Activated CD8-positive, alpha-beta T cell treated with anti-CD3 and anti-CD28 coated beads, Interleukin-2, amount 10 ng/mL, durations not matched to agents 7 days and 5 days (primary cell): ENCODE measurements at regions of chr3 and their contacts with region 1.

Region 1: DNA sequence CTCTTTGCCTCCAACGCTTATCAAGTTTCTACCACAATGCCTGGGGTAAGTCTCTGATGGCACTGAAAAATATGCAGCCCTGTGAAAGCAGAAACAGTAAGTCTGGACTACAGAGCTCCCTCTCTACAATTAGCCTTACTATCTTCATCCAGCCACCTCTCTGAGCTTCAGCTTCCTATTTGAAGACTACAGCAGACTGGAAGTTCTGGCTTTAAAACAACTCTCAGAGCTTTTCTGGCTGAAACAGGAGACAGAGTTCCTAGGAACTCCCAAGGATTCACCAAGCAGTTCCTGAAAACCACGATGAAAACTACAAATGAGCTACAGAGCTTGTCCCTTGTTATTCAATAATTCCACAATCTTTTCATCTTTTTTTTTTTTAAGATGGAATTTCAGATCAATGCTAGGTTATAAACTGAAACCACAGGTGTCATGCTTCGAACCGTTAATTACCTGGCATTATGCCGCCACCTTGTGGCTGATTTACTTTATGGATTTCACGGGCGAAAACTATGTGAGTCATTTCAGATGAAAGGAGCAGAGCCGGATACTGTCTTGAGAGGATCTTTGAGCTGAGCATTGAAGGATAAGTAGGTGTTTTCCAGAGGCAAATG is 3.9 kb downstream of the CRYGS start:
- DNase-seq: peak; percentile 88
- ATAC-seq: peak; percentile 91
- H3K4me3 Mint-ChIP-seq: no peak overlapping the region
- H3K27ac Mint-ChIP-seq: no peak overlapping the region
- H3K4me1 Mint-ChIP-seq: peaks cover 11% of the 10 kb centered on the region
- H3K27me3 Mint-ChIP-seq: no peaks in the 10 kb centered on the region

Region 2: DNA sequence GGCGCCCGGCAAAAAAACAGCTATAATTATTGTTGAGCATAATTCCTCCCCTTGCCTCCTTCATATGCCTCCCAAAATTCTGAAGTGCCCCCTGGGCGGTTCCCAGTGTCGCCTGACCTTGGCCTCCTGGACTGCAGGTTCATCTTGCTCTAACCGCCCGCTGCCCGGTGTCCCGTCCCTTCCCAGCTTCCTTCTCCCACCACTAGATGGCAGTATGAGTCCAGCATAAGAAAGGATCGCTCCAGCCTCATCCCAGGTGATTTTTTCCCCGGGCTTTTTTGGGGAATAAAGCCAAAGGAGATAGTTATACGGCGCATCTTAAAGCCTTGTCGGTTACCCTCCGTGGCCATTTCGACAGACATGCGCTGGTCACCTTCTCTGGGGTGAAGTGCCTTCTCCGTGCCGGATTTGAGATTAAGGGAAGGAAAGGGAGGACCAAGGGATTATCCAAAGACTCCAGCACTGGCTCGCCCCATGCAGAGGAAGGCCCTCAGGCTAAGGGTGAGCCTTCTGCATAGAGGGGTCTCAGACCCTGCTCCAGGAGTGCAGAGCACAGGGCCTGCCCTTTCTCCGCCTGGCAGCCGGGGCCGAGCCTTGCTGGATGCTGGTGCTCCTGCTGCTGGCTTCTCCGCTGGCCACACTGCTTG is 556.7 kb before region 1 on chr3:
- CTCF ChIA-PET with region 1: interaction called, 47 read pairs
- POLR2A ChIA-PET with region 1: interaction called, 4 read pairs
- DNase-seq: peak; percentile 61
- ATAC-seq: peak; percentile 83
- H3K4me3 Mint-ChIP-seq: no peak overlapping the region
- H3K27ac Mint-ChIP-seq: no peak overlapping the region
- H3K4me1 Mint-ChIP-seq: peaks cover 4% of the 10 kb centered on the region
- H3K27me3 Mint-ChIP-seq: peaks cover 17% of the 10 kb centered on the region

Region 3: DNA sequence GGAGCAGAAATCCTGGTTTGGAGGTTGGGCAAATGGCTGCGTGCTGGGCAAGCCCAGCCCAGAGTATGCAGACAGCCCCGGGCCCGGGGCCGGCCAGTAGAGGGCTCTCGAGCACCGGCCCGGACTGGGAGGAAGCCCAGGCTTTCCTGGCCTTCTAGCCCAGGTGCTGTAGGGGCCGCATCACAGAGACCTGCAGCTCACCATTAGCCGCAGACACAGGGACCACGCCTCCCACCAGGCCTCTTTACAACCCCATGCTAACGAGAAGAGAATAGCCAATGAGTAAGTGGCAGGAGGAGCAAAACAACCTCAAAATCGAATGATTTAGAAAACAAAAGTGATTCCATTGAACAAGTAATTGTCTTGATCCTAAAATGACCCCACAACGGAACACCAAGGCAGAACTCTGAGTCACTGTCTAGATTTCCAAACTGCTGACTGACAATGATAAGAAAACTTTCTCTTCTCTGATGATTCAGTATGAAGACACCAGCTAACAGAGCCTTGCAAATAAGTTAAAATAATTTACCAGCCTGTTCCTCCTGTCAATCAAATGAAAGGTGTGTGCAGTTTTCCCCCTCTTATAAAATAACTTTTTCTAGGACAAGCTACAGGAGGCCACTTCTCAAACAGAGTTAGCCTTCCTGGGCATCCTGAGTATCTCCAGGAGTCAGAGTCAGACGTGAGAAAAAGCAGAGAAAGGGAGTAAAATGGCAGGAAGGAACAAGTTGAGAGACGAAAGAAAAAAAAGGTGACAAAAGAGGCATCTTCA is 280.5 kb before region 1 on chr3:
- CTCF ChIA-PET with region 1: interaction called, 179 read pairs
- POLR2A ChIA-PET with region 1: no interaction called
- DNase-seq: peak; percentile 68
- ATAC-seq: peak; percentile 96
- H3K4me3 Mint-ChIP-seq: no peak overlapping the region
- H3K27ac Mint-ChIP-seq: no peak overlapping the region
- H3K4me1 Mint-ChIP-seq: peaks cover 11% of the 10 kb centered on the region
- H3K27me3 Mint-ChIP-seq: no peaks in the 10 kb centered on the region

Region 4: DNA sequence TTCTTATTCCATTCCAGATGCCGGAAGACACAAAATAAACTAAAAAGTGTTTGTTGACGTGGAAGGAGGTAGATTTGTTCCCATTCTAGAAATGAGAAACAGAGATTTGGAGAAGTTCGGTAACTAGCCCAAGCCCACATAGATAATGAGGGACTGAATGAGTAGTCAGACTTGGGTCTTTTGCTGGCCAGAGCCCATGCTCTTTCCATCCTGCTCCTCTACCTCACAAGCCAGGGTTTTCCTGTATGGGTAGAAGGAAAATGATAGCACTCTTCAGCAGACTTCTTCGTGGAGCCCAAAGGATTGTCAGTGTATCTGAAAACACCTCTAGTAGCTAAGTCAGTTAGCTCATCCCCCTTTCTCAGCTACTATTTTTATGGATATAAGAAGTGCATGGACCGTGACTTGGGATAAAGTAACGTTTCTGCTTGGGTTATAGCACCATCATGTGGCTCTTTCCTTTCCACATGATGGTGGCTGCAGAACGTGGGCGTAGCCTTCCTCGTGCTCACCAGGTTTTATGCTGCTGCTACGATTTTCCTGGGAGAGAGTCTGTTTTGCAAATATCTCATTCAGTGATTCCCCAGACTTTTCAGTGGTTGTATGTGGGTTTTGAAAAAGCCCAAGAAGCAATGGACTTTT is 262.9 kb before region 1 on chr3:
- CTCF ChIA-PET with region 1: interaction called, 11 read pairs
- POLR2A ChIA-PET with region 1: no interaction called
- DNase-seq: no peak
- ATAC-seq: no peak
- H3K4me3 Mint-ChIP-seq: no peak overlapping the region
- H3K27ac Mint-ChIP-seq: no peak overlapping the region
- H3K4me1 Mint-ChIP-seq: no peaks in the 10 kb centered on the region
- H3K27me3 Mint-ChIP-seq: peaks cover 22% of the 10 kb centered on the region

Region 5: DNA sequence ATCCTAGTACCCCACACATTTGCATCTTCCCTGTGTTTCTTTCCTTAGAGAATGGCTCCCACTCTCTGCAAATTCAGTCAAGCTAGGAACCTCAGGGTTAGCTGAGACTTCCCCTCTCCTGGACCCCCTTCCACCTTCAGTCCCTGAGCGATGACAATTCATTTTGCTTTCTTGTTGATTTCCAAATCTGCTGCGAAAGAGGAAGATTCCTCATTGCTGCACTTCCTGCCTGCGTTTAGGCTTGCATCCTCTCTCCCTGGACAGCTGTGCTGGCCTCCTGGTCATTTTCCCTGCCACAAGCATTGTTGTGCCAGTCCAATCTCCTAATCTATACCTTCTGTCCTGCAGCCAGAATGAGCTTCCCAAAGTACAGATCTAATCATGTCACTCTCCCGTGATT is 166.0 kb before region 1 on chr3:
- CTCF ChIA-PET with region 1: no interaction called
- POLR2A ChIA-PET with region 1: no interaction called
- DNase-seq: no peak
- ATAC-seq: no peak
- H3K4me3 Mint-ChIP-seq: no peak overlapping the region
- H3K27ac Mint-ChIP-seq: no peak overlapping the region
- H3K4me1 Mint-ChIP-seq: no peaks in the 10 kb centered on the region
- H3K27me3 Mint-ChIP-seq: peaks cover 14% of the 10 kb centered on the region

Region 6: GRCh38 chr3:186476044-186476468 is 64.3 kb before region 1 on chr3:
- CTCF ChIA-PET with region 1: no interaction called
- POLR2A ChIA-PET with region 1: no interaction called
- DNase-seq: no peak
- ATAC-seq: no peak
- H3K4me3 Mint-ChIP-seq: no peak overlapping the region
- H3K27ac Mint-ChIP-seq: no peak overlapping the region
- H3K4me1 Mint-ChIP-seq: no peaks in the 10 kb centered on the region
- H3K27me3 Mint-ChIP-seq: peaks cover 3% of the 10 kb centered on the region

Region 7: DNA sequence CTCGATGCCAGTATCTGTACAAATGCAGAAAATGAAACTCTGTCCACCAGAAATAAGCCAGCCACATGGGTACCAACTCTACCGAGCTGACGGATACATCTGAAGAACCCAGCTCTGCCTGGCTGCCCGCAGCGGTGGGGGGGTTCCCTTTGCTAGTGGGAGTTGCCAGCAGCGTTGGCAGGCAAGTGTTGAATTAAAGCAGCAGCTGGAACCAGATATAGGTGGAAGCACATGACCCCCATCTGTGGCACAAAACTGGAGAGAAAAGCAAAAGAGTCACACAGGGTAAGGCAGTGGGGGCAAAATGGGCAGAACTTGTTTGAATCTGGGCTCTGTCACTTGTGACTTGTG is 14.1 kb before region 1 on chr3:
- CTCF ChIA-PET with region 1: interaction called, 29 read pairs
- POLR2A ChIA-PET with region 1: no interaction called
- DNase-seq: no peak
- ATAC-seq: no peak
- H3K4me3 Mint-ChIP-seq: no peak overlapping the region
- H3K27ac Mint-ChIP-seq: no peak overlapping the region
- H3K4me1 Mint-ChIP-seq: peaks cover 21% of the 10 kb centered on the region
- H3K27me3 Mint-ChIP-seq: no peaks in the 10 kb centered on the region

Region 8: DNA sequence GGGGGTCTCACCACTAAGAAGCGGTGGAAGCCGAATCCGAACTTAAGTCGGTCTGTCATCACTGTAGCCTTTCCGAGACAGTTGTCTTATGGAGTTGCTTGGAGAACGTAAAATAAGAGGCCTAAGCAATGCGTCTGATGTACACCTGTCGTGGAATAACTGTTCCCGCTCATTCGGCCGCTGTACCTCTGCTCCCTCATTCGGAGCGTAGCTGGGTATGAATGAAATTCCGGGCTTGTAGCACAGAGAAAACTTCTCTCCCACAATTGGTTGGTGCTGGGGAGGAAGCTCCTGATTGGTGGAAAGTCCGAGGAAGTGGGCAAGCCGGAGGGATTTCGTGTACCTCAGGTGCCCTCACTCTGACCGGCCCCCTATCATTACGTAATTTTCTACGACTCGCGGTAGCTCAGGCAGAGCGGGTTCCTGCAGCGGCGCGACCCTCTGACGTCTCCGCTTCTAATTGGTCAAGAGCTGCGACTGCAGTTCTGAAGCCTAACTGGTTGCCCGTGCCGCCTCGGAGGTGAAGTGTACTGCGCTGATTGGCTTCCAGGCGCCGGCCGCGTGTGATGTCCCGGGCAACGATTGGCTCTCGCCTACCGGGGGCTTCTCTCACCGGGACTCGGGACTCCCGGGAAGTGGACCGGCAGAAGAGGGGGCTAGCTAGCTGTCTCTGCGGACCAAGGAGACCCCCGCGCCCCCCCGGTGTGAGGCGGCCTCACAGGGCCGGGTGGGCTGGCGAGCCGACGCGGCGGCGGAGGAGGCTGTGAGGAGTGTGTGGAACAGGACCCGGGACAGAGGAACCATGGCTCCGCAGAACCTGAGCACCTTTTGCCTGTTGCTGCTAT is 30.0 kb after region 1 on chr3 and contains the start of gene DNAJB11:
- CTCF ChIA-PET with region 1: interaction called, 21 read pairs
- POLR2A ChIA-PET with region 1: interaction called, 7 read pairs
- DNase-seq: peak; percentile 99
- ATAC-seq: peak; percentile 89
- H3K4me3 Mint-ChIP-seq: peak within 1 kb of the TSS; percentile 97
- H3K27ac Mint-ChIP-seq: peak within 1 kb of the TSS; percentile 99
- H3K4me1 Mint-ChIP-seq: peaks cover 60% of the 10 kb centered on the region
- H3K27me3 Mint-ChIP-seq: no peaks in the 10 kb centered on the region
- total RNA-seq, gene DNAJB11: 55.9 to 56.5 TPM